Mammary epithelial cell (primary cell): ENCODE measurements at regions of chr1 and their contacts with region 1.

Region 1: GRCh38 chr1:206803221-206803730 is 31.0 kb upstream of the IL10 start:
- DNase-seq: no peak
- H3K4me3 ChIP-seq: no peak overlapping the region
- H3K27ac ChIP-seq: no peak overlapping the region
- H3K4me1 ChIP-seq: peaks cover 14% of the 10 kb centered on the region
- H3K27me3 ChIP-seq: no peaks in the 10 kb centered on the region
- CTCF ChIP-seq: no peak

Region 2: GRCh38 chr1:206744683-206745082 is 58.6 kb before region 1 on chr1:
- CTCF ChIA-PET with region 1: no interaction called
- dilution Hi-C with region 1: no loop called
- in situ Hi-C with region 1: no loop called
- intact Hi-C with region 1: loop called (anchors 2 kb)
- DNase-seq: no peak
- H3K4me3 ChIP-seq: no peak overlapping the region
- H3K27ac ChIP-seq: no peak overlapping the region
- H3K4me1 ChIP-seq: no peaks in the 10 kb centered on the region
- H3K27me3 ChIP-seq: no peaks in the 10 kb centered on the region
- CTCF ChIP-seq: no peak

Region 3: DNA sequence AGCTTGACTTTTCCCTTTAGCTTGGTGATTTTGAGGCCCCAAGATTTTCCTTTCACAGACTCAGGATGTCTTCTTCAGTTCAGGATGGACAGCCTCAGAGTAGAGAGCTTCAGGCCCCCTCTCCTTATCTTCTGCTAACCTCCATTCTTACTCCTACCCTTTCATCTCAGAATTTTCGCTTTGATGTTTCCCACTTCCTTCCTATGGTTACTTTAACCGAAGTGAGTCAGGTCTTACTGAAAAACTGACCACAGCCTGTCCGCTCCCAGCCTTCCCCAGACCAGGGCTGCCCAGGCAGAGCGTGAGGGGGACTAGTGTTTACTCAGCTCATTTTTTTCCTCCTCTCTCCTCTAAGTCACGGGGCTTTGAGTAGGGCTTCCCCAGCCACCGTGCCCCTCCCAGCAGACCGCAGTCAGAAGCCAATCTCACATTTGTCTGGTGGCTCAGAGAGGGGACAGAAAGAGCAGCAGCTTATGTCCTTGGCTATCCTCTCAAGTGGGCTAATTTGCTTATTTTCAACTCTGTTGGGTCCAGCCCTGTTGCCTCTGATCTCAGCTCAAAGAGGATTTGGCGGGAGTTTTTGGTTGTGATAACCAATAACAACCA is 36.9 kb before region 1 on chr1:
- CTCF ChIA-PET with region 1: no interaction called
- dilution Hi-C with region 1: no loop called
- in situ Hi-C with region 1: no loop called
- intact Hi-C with region 1: no loop called
- DNase-seq: peak; percentile 74
- H3K4me3 ChIP-seq: no peak overlapping the region
- H3K27ac ChIP-seq: no peak overlapping the region
- H3K4me1 ChIP-seq: no peaks in the 10 kb centered on the region
- H3K27me3 ChIP-seq: no peaks in the 10 kb centered on the region
- CTCF ChIP-seq: no peak

Region 4: GRCh38 chr1:206839857-206840256 is 36.6 kb after region 1 on chr1:
- CTCF ChIA-PET with region 1: no interaction called
- dilution Hi-C with region 1: loop called (anchors 5 kb)
- in situ Hi-C with region 1: no loop called
- intact Hi-C with region 1: no loop called
- DNase-seq: no peak
- H3K4me3 ChIP-seq: no peak overlapping the region
- H3K27ac ChIP-seq: no peak overlapping the region
- H3K4me1 ChIP-seq: peaks cover 9% of the 10 kb centered on the region
- H3K27me3 ChIP-seq: no peaks in the 10 kb centered on the region
- CTCF ChIP-seq: no peak